PC-9 (cell line): ENCODE measurements at regions of chr2 and their contacts with region 1.

Region 1: GRCh38 chr2:167310442-167310841 is 422.2 kb downstream of the XIRP2 start:
- DNase-seq: no peak
- H3K4me3 ChIP-seq: no peak overlapping the region
- H3K27ac ChIP-seq: no peak overlapping the region
- H3K4me1 ChIP-seq: no peaks in the 10 kb centered on the region
- H3K27me3 ChIP-seq: no peaks in the 10 kb centered on the region
- CTCF ChIP-seq: no peak

Region 2: GRCh38 chr2:167524786-167525185 is 214.3 kb after region 1 on chr2:
- CTCF ChIA-PET with region 1: no interaction called
- POLR2A ChIA-PET with region 1: no interaction called
- intact Hi-C with region 1: no loop called
- DNase-seq: no peak
- H3K4me3 ChIP-seq: no peak overlapping the region
- H3K27ac ChIP-seq: no peak overlapping the region
- H3K4me1 ChIP-seq: no peaks in the 10 kb centered on the region
- H3K27me3 ChIP-seq: no peaks in the 10 kb centered on the region
- CTCF ChIP-seq: no peak

Region 3: DNA sequence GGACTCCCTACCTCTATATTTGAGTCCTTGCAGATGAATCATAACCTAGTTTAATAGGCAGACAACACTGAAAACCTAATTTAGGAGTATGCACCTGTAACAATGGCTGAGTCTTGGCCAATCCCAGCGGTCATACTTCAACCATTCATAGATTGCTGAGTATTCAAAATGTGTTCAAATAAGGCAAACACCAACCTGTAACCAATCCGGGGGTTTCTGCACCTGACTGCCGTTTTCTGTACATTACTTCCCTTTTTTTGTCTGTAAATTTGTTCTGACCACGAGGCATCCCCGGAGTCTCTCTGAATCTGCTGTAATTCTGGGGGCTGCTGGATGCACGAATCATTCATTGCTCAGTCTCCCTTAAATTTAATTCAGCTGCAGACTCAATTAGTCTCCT is 598.3 kb after region 1 on chr2:
- CTCF ChIA-PET with region 1: interaction called, 12 read pairs
- POLR2A ChIA-PET with region 1: no interaction called
- intact Hi-C with region 1: no loop called
- DNase-seq: no peak
- H3K4me3 ChIP-seq: no peak overlapping the region
- H3K27ac ChIP-seq: no peak overlapping the region
- H3K4me1 ChIP-seq: no peaks in the 10 kb centered on the region
- H3K27me3 ChIP-seq: no peaks in the 10 kb centered on the region
- CTCF ChIP-seq: no peak